PC-9 (cell line): ENCODE measurements at regions of chr6 and their contacts with region 1.

Region 1: GRCh38 chr6:112163295-112164257 is 76.2 kb downstream of the FAM229B start:
- DNase-seq: no peak
- H3K4me3 ChIP-seq: no peak overlapping the region
- H3K27ac ChIP-seq: no peak overlapping the region
- H3K4me1 ChIP-seq: no peaks in the 10 kb centered on the region
- H3K27me3 ChIP-seq: no peaks in the 10 kb centered on the region
- CTCF ChIP-seq: peak; percentile 74

Region 2: GRCh38 chr6:112054555-112055160 is 108.9 kb before region 1 on chr6:
- CTCF ChIA-PET with region 1: no interaction called
- POLR2A ChIA-PET with region 1: no interaction called
- intact Hi-C with region 1: no loop called
- DNase-seq: peak in 1 of 2 experiments; percentile 18
- H3K4me3 ChIP-seq: no peak overlapping the region
- H3K27ac ChIP-seq: no peak overlapping the region
- H3K4me1 ChIP-seq: 0 out of 2 replicates have a peak, but pooled peaks cover 3% of the 10 kb centered on the region
- H3K27me3 ChIP-seq: no peaks in the 10 kb centered on the region
- CTCF ChIP-seq: no peak

Region 3: GRCh38 chr6:112330071-112330878 is 166.7 kb after region 1 on chr6:
- CTCF ChIA-PET with region 1: interaction called, 13 read pairs
- POLR2A ChIA-PET with region 1: no interaction called
- intact Hi-C with region 1: no loop called
- DNase-seq: peak; percentile 17 to 74
- H3K4me3 ChIP-seq: no peak overlapping the region
- H3K27ac ChIP-seq: peak overlapping the region; percentile 44
- H3K4me1 ChIP-seq: peaks cover 18% of the 10 kb centered on the region; the same call in 1 of the 2 replicates
- H3K27me3 ChIP-seq: no peaks in the 10 kb centered on the region
- CTCF ChIP-seq: peak; percentile 36; the same call in 1 of the 2 replicates